ENCODE measurements at regions of chr10 and their contacts with region 1.

Region 1: DNA sequence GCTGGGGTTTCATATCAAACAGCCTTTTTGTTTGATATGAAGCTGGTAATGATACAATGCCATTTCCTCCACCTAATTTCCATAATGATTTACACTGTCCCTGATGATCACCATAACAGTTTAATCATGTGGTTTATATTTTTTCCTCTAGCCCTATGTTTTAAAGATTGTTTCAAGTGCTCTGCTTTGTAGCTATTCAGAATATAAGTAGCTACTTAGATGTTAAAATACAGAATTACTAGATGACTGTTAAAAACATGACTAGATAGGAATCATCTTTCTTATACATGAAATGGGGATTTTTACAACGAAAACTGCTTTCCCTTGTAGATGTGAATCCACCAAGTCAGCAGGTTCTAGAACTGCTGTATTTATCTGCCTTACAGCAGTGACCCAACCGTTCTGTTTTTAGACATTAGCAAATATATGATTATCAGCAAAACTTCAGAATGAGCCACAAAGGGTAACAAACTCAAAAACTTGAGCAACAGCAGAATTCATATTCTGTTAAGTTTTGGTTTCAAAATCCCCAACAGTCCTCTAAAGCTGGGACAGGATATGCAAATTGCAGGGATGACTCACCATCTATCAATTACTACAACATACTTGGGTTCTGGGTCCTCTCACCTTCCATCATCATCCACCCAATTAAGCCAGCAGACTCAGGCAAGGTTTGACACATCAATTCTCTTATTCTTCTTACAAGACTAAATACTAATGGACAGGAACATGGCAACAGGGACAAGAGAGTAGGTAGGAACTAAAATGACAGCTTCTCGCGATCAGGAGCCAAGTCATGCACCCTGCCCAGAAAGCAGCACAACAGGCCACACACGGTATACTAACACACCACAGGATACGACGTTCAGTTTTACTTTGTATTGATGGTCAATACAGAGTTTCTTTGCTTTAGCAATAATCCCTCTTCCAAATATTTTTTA is 83.9 kb downstream of the PIP4K2A start:
- DNase-seq: no peak
- ATAC-seq: peak; percentile 85
- H3K4me3 Mint-ChIP-seq: peak overlapping the region; percentile 75
- H3K27ac Mint-ChIP-seq: peak overlapping the region; percentile 95
- H3K4me1 Mint-ChIP-seq: peaks cover 96% of the 10 kb centered on the region
- H3K27me3 Mint-ChIP-seq: no peaks in the 10 kb centered on the region
- CTCF ChIP-seq: no peak

Region 2: DNA sequence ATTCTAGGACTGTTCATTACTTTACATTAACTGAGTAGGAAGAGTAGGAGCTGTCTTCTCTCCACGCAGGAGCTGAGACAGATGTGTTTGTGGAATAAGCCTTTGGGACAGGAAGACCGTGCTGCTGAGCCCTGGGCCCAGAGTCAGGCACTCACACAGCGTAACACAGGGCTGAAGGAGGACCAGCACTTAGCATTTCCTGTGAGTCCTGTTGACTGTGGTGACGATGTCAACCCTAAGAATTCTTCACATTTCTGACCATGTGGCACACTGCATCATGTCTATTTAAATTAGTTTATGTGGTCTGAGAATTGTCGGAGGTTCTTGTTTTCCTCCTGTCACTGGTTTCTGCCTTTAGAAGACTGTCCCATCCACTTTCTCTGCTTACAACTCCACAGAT is 33.4 kb before region 1 on chr10:
- CTCF ChIA-PET with region 1: interaction called, 4 read pairs
- POLR2A ChIA-PET with region 1: interaction called, 14 read pairs
- intact Hi-C with region 1: loop called (anchors 1 kb)
- DNase-seq: no peak
- ATAC-seq: peak; percentile 43
- H3K4me3 Mint-ChIP-seq: peak overlapping the region; percentile 48
- H3K27ac Mint-ChIP-seq: peak overlapping the region; percentile 83
- H3K4me1 Mint-ChIP-seq: peaks cover 96% of the 10 kb centered on the region
- H3K27me3 Mint-ChIP-seq: no peaks in the 10 kb centered on the region
- CTCF ChIP-seq: no peak

Region 3: DNA sequence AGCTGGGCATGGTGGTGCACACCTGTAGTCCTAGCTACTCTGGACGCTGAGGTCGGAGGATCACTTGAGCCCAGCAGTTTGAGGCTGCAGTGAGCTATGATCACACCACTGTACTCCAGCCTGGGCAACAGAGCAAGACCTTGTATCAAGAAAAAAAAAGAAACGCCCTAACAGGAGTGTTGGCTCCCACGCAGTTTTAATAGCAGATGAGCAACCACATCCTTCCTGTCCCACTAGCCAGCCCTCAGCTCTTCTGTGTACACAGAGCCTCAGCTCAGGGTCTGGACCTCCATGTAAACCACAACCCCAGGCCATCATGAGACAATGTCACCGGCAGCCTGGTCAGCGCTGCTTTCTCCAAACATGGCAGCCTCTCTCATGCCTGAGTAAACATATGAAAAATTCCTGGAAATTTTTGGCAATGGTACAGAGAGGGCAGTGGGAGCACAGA is 24.3 kb before region 1 on chr10:
- CTCF ChIA-PET with region 1: interaction called, 6 read pairs
- POLR2A ChIA-PET with region 1: interaction called, 25 read pairs
- intact Hi-C with region 1: loop called (anchors 1 kb)
- DNase-seq: no peak
- ATAC-seq: peak; percentile 75
- H3K4me3 Mint-ChIP-seq: peak overlapping the region; percentile 68
- H3K27ac Mint-ChIP-seq: peak overlapping the region; percentile 94
- H3K4me1 Mint-ChIP-seq: peaks cover 93% of the 10 kb centered on the region
- H3K27me3 Mint-ChIP-seq: no peaks in the 10 kb centered on the region
- CTCF ChIP-seq: no peak

Region 4: GRCh38 chr10:22615819-22616499 is 14.5 kb before region 1 on chr10:
- CTCF ChIA-PET with region 1: interaction called, 4 read pairs
- POLR2A ChIA-PET with region 1: interaction called, 18 read pairs
- intact Hi-C with region 1: loop called (anchors 1 kb)
- DNase-seq: peak; percentile 36
- ATAC-seq: peak; percentile 74
- H3K4me3 Mint-ChIP-seq: peak overlapping the region; percentile 86
- H3K27ac Mint-ChIP-seq: peak overlapping the region; percentile 96
- H3K4me1 Mint-ChIP-seq: peaks cover 95% of the 10 kb centered on the region
- H3K27me3 Mint-ChIP-seq: no peaks in the 10 kb centered on the region
- CTCF ChIP-seq: no peak

Region 5: DNA sequence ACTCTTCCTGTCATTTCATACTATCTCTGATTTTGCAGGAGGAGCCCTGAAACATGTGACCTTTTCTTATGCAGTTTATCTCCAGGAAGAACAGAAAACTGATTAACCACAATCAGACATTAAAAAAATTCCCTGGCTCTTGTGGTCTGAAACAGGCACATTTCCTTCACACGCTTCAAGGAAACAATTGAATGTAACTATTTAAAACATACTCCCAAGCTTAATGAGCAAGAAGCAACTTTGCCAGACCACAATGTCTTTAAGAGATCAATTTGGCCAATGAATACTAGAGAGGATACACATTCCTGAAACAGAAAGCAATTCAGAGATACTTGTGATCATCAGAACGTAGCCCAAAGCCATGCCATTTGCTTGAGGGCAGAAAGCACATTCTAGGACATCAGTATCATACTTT is 18.1 kb after region 1 on chr10:
- CTCF ChIA-PET with region 1: interaction called, 4 read pairs
- POLR2A ChIA-PET with region 1: interaction called, 8 read pairs
- intact Hi-C with region 1: loop called (anchors 2 kb)
- DNase-seq: no peak
- ATAC-seq: no peak
- H3K4me3 Mint-ChIP-seq: peak overlapping the region; percentile 24
- H3K27ac Mint-ChIP-seq: peak overlapping the region; percentile 18
- H3K4me1 Mint-ChIP-seq: peaks cover 90% of the 10 kb centered on the region
- H3K27me3 Mint-ChIP-seq: no peaks in the 10 kb centered on the region
- CTCF ChIP-seq: no peak

Measured in activated B cell treated with CpG ODN at 0.5 μM for 24 hours (primary cell).